Activated CD8-positive, alpha-beta T cell treated with anti-CD3 and anti-CD28 coated beads, Interleukin-2, amount 10 ng/mL, durations not matched to agents 7 days and 5 days (primary cell): ENCODE measurements at regions of chr11 and their contacts with region 1.

Region 1: GRCh38 chr11:59802639-59803176 is 7.9 kb downstream of the MRPL16 start:
- DNase-seq: peak; percentile 75
- ATAC-seq: peak; percentile 74
- H3K4me3 Mint-ChIP-seq: no peak overlapping the region
- H3K27ac Mint-ChIP-seq: no peak overlapping the region
- H3K4me1 Mint-ChIP-seq: peaks cover 32% of the 10 kb centered on the region
- H3K27me3 Mint-ChIP-seq: no peaks in the 10 kb centered on the region

Region 2: DNA sequence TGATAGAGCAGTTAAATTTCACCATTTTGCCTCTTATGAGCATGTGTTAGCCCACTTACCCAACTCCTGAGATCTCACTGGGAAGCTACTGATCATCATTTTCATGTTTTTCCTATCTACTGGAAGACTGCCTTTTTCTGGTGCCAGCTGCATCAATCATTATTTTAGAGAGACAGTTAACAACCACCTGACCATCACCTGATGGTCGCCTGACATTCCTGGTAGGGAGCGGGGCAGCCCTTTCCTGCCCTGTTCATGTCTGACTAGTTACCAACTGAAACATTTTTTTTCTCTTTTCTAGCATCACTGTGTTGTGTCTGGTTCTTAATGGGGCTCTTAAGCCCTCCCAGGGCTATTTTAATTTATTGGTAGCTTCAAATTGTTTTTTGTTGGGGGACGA is 113.7 kb before region 1 on chr11:
- CTCF ChIA-PET with region 1: no interaction called
- POLR2A ChIA-PET with region 1: no interaction called
- DNase-seq: no peak
- ATAC-seq: no peak
- H3K4me3 Mint-ChIP-seq: no peak overlapping the region
- H3K27ac Mint-ChIP-seq: no peak overlapping the region
- H3K4me1 Mint-ChIP-seq: peaks cover 2% of the 10 kb centered on the region
- H3K27me3 Mint-ChIP-seq: peaks cover 39% of the 10 kb centered on the region

Region 3: DNA sequence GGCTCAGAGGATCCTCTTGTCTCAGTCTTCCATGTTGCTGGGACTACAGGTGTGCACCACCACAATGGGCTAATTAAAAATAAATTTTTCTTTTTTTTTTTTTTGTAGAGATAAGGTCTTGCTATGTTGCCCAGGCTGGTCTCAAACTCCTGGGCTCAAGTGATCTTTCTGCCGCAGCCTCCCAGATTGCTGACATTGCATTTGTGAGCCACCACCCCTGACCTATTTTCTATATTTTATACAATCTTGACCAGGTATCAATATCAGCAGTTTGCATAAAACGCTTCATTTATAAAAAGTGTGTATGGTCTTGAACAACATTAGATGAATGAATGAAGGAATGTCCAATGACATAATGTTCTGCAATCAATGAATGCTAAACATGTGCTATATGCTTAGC is 56.6 kb before region 1 on chr11:
- CTCF ChIA-PET with region 1: interaction called, 146 read pairs
- POLR2A ChIA-PET with region 1: no interaction called
- DNase-seq: no peak
- ATAC-seq: no peak
- H3K4me3 Mint-ChIP-seq: no peak overlapping the region
- H3K27ac Mint-ChIP-seq: no peak overlapping the region
- H3K4me1 Mint-ChIP-seq: no peaks in the 10 kb centered on the region
- H3K27me3 Mint-ChIP-seq: peaks cover 47% of the 10 kb centered on the region

Region 4: DNA sequence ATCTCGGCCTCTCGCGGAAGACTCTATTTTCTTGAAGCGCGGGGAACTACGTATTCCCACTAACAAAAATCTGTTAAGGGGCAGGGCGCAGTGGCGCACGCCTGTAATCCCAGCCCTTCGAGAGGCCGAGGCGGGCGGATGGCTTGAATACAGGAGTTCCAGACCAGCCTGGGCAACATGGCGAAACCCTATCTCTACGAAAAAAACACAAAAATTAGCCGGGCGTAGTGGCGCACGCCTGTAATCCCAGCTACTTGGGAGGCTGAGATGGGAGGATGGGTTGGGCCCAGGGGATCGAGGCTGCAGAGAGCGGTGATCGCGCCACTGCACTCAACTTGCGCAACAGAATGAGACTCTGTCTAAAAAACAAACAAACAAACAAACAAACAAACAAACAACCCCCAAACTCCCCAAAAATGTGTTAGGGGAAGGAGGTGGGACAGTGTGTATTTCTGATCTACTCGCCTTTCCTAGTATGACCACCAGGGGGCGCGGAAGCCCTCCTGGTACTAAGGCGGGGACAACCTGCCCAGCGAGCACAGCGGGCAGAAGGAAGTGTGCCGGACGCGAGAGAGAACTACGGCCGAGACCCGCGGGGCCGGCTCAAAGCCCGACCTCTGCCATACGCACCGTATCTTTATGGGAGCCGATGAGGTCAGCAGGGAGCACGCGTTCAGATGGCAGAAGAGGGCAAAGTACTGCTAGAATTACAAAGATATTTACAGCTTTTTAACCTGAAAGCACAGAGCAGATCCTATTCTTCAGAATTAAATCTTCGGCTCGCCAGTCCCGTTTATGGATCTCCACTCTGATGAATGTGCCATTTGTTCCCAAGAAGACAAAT is 48.8 kb before region 1 on chr11:
- CTCF ChIA-PET with region 1: interaction called, 146 read pairs
- POLR2A ChIA-PET with region 1: interaction called, 8 read pairs
- DNase-seq: peak; percentile 92
- ATAC-seq: peak; percentile 75
- H3K4me3 Mint-ChIP-seq: peak overlapping the region; percentile 98
- H3K27ac Mint-ChIP-seq: peak overlapping the region; percentile 91
- H3K4me1 Mint-ChIP-seq: peaks cover 37% of the 10 kb centered on the region
- H3K27me3 Mint-ChIP-seq: peaks cover 9% of the 10 kb centered on the region

Region 5: DNA sequence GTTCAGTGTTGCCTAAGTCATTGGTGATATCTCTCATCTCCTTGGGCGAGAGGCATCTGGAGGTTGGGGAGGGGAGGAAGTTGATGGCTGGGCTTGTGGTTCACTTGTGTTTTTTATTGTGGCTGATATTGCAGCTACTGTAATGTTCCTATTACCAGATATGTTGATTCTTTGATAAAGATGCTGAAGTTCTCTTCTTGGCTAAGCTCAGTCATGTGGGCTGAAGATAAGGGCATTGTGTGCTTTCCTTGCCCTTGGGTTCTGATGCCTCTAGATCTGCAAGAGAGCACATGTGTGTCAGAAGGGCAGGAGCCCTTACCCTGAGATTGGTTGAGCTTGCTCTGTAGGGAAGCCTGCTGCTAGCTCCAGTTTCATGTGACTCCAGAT is 35.5 kb before region 1 on chr11:
- CTCF ChIA-PET with region 1: interaction called, 20 read pairs
- POLR2A ChIA-PET with region 1: no interaction called
- DNase-seq: peak; percentile 77
- ATAC-seq: peak; percentile 83
- H3K4me3 Mint-ChIP-seq: no peak overlapping the region
- H3K27ac Mint-ChIP-seq: no peak overlapping the region
- H3K4me1 Mint-ChIP-seq: peaks cover 31% of the 10 kb centered on the region
- H3K27me3 Mint-ChIP-seq: no peaks in the 10 kb centered on the region

Region 6: DNA sequence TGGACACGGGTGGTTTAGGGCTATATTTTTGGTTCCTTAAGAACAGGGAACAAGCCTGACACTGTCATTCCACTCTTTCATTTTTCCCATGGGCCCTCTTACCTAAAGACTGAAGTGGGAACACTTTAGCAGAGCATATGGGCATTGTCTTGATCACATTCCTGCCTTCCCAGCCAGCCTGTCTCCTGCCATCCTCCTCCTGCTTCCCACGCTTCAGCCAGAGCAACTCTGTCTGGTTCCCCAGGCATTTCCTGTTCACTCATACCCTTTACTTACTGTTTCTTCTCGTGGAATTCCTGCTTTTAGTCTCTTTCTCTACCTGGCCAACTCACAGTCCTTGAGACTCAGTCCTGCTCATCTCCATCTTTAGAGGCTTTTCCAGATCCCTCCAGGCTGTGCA is 14.9 kb before region 1 on chr11:
- CTCF ChIA-PET with region 1: interaction called, 26 read pairs
- POLR2A ChIA-PET with region 1: no interaction called
- DNase-seq: no peak
- ATAC-seq: no peak
- H3K4me3 Mint-ChIP-seq: no peak overlapping the region
- H3K27ac Mint-ChIP-seq: peak overlapping the region; percentile 43
- H3K4me1 Mint-ChIP-seq: peaks cover 53% of the 10 kb centered on the region
- H3K27me3 Mint-ChIP-seq: no peaks in the 10 kb centered on the region

Region 7: DNA sequence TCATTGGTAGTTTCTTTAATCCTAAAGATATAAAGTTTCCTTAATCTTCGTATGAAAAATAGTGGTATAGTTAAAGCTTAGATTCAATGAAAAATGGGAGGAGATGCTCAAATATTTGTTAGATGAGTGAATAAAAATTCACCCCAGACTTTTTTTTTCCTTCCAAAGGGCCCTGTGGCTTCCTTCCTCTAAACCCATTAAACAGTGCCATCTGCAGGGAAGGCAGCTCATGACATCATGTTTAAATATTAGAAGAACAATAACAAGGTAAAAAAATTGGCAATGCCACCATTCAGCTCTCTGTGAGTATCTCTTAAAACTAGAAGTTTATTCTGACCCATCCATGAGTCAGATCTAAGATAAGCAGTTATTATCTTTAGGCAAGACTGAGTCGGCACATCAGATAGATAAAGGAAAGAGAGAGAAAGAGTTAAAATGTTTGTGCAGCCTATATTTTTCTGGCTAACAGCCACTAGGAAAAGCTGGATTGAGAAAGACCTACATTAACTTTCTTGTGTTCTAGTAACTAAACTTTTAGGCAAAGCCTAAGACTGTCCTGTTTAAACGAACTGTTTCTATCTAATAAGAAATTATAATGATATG is 116.4 kb after region 1 on chr11:
- CTCF ChIA-PET with region 1: interaction called, 10 read pairs
- POLR2A ChIA-PET with region 1: no interaction called
- DNase-seq: peak; percentile 56
- ATAC-seq: no peak
- H3K4me3 Mint-ChIP-seq: no peak overlapping the region
- H3K27ac Mint-ChIP-seq: no peak overlapping the region
- H3K4me1 Mint-ChIP-seq: no peaks in the 10 kb centered on the region
- H3K27me3 Mint-ChIP-seq: no peaks in the 10 kb centered on the region